Ovary (tissue), 10 donors: ENCODE measurements at regions of chr10 and their contacts with region 1.

Region 1: DNA sequence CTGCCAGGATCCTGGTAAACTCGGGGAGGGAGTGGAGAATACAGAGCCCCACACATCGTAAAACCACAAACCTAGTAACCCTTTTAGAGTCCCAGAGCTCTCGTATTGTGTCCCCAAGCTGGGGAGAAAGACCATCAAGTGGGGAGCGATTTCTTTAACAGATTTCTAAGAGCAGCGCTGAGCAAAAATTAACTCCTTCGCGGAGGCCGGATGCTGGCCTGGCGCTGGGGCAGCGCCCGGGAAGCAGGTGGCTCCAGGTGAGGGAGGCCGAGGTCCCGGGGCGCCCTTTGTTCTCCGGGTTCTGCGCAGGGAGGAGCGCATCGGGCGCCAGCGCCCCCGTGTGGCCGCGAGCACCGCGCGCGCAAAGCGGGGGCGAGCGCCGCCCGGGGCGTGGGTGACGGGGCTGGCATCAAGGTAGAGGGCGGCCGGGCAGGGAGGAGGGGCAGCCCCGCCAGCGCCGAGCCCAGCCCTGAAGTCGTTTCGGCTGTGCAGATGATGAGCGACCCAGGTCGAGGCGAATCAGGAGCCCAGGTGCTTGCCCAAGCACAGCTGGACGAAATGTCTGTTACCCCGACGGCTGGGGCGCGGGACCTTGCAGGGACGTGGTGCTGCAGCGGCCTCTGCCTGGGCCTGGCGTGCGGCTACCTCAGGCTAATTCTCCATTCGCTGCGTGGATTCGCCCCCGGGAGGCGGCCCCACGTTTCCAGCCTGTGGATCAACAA is 10.4 kb upstream of the FGFR2 start:
- DNase-seq: peak; percentile 38 to 75 (median 56)
- H3K4me3 ChIP-seq: peak overlapping the region; percentile 30
- H3K27ac ChIP-seq: no peak overlapping the region
- H3K4me1 ChIP-seq: peaks cover 2% of the 10 kb centered on the region
- H3K27me3 ChIP-seq: no peaks in the 10 kb centered on the region
- CTCF ChIP-seq: peak; percentile 86 to 90 (median 89)
- EP300 ChIP-seq: no peak
- POLR2A ChIP-seq: no peak

Region 2: DNA sequence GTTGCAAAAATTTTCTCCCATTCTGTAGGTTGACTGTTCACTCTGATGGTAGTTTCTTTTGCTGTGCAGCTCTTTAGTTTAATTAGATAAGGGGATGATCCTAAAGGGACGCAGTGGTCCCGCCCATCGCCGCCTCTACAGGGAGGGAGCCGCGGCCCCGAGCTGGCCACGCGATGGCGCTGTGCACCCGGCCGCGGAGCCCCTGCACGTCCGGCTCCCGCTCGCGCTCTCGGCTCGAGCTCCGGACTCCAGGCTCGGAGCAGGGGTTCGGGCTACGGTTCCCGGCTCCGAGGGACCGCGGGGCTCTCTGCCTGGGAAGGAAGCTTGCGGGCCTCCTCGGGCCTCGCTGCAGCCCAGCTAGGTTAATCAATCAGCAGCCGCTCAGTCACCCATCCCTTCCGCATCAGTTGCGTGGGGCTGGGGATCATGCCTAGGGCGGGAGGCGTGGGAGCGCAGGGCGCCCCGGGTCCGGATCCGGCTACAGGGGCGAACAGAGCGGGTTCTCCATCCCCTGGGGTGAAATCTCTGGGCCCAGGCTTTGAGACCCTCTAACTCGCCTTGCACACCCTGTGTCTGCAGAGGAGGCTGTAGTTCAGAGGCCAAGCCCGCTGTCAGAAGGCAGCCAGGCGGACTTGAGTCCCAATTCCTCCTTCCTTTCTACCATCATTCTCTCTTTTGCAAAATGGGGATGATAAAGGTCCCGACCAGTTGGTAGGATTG is 659.6 kb before region 1 on chr10:
- intact Hi-C with region 1: loop called in 2 of 4 experiments (anchors 5 kb)
- DNase-seq: peak; percentile 60 to 88 (median 73)
- H3K4me3 ChIP-seq: peak overlapping the region; percentile 35
- H3K27ac ChIP-seq: no peak overlapping the region
- H3K4me1 ChIP-seq: peaks cover 3% of the 10 kb centered on the region
- H3K27me3 ChIP-seq: no peaks in the 10 kb centered on the region
- CTCF ChIP-seq: peak; percentile 66 to 92 (median 70)
- EP300 ChIP-seq: no peak
- POLR2A ChIP-seq: no peak

Region 3: DNA sequence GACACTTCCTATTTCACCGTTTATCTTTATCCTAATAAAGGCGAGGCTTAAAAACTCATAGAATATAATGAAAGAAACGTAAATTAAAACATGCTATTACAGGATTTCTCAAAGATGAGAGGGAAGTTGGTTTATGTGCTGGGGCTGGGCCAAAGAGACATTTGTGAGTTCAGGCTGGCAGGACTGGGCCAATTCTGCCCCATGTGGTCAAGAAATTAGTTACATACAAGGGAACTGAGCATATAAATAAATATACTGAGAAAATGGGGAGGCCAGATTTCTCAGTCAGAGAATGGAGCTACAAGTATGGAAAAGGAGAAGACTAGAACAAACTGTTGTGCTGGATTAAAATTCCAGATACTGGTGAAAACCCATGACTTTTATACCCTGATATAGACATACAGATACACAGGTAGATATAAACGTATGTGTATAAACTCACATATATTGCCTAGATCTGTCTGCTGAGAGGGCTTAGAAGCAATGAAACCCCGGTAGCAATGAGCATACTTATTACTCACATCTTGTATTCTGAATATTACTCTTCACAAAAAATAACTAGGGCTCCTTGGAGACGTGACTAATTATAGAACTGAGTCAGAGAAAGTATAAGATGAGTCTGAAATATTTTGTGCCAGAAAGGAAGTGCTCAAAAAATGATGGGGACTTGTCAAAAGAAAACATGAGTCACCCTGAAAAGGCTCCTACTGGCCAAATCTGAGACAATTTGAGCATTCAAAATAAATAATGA is 145.3 kb after region 1 on chr10:
- intact Hi-C with region 1: no loop called
- DNase-seq: no peak
- H3K4me3 ChIP-seq: no peak overlapping the region
- H3K27ac ChIP-seq: no peak overlapping the region
- H3K4me1 ChIP-seq: no peaks in the 10 kb centered on the region
- H3K27me3 ChIP-seq: no peaks in the 10 kb centered on the region
- CTCF ChIP-seq: no peak
- EP300 ChIP-seq: no peak
- POLR2A ChIP-seq: no peak

Region 4: DNA sequence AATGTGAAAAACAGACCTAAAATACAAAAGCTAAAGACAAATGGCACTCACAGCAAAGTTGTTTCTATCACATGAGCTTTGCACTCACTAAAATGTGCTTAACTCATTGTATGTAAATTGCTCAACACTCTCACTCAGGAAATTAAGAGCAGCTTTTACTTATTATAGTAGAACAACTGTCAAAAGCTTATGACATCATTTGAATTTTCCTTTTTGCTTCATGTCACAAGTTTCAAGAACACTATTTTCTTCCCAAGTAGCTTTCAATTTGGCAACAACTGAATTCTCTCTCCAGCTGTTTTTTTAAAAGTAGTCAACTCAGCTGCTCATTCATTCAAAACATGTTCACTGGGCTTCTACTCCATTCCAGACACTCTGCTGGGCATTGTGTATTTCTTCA is 272.3 kb after region 1 on chr10:
- intact Hi-C with region 1: no loop called
- DNase-seq: no peak
- H3K4me3 ChIP-seq: no peak overlapping the region
- H3K27ac ChIP-seq: no peak overlapping the region
- H3K4me1 ChIP-seq: no peaks in the 10 kb centered on the region
- H3K27me3 ChIP-seq: no peaks in the 10 kb centered on the region
- CTCF ChIP-seq: no peak
- EP300 ChIP-seq: no peak
- POLR2A ChIP-seq: no peak